ENCODE measurements at regions of chr2 and their contacts with region 1.

Region 1: DNA sequence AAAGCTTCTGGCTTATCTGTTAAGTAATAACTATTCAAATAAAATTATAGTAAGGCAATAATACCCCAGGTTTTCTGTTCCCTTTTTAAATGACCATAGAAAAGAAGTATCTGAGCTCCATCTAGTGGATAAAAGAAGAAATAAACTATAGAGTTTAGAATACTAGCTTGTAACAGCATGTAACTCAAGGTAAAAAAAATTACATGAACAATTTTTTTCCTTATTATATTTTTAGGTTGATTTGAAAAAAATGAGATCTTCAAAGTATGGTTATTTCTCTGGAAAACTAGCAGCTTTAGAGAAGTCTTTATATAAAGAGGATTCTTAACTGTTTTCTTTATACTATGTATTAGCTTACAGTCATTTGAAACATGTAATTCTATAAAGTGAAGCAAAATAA is 58.1 kb downstream of the NCKAP1 start:
- DNase-seq: no peak

Region 2: DNA sequence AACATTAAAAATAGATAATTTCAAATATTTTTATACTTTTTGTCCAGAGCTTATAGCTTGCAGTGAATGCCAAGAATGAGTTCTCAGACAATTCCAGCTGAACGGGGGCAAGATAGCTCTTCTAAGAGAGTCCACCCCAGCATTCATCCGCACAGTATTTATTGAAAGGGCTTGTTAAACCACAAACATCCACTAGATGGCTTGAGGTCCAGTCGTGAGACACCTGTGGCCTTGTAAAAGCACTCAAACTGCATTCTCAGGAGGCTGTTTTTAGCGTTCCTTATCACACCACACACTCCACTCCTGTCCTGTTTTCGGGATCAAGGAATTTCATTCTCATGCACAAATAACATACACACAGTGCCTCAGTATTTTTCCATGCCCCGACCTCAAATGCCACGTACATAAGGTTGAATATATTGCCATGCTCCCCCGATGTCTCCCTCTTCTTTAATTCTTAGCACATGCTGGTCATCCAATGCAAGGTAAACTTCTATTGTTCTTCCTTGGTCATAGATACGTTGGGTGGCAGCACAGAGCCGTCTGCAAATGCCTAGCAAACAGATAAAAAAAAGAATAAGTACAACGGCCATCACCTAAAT is 216.7 kb before region 1 on chr2:
- intact Hi-C with region 1: loop called (anchors 5 kb)
- DNase-seq: no peak

Region 3: DNA sequence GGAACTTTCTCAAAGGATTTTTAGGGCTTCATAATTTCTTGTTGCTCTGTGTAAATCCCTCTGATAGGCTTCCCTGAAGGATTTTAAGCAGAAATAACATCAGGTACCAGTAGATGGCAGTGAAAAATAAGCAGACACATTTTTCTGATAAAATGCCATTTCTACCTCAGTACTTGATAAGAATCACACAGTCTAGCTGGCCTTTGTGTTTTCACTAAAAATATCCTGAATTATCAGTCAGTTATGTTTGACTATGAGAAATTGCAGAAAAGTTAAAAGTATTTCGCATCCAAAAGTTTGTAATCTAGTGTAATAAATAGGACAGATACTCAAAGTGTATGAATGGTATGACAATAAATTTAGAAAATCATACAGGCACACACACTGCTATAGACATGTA is 195.3 kb before region 1 on chr2:
- intact Hi-C with region 1: loop called (anchors 5 kb)
- DNase-seq: no peak

Region 4: GRCh38 chr2:183038341-183039300 is 58.5 kb after region 1 on chr2 and contains the start of gene NCKAP1:
- intact Hi-C with region 1: loop called (anchors 5 kb)
- DNase-seq: peak; percentile 94
- total RNA-seq, gene NCKAP1: 153 TPM

Region 5: DNA sequence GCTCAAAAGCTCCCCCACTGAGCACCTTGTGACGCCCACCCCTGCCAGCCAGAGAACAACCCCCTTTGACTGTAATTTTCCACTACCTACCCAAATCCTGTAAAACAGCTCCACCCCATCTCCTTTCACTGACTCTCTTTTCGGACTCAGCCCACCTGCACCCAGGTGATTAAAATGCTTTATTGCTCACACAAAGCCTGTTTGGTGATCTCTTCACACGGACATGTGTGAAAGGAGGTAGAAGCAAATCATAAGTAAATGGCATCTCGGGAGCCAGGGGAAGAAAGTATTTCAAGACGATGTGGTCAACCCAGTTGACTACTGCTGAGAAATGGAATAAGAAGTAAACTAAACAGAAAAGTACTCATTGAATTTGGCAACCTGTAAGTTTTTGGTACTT is 69.3 kb after region 1 on chr2:
- intact Hi-C with region 1: no loop called
- DNase-seq: no peak

Measured in cardiac septum (tissue), 1 donor.